Activated B cell treated with CpG ODN at 0.5 μM for 24 hours (primary cell): ENCODE measurements at regions of chr5 and their contacts with region 1.

Region 1: DNA sequence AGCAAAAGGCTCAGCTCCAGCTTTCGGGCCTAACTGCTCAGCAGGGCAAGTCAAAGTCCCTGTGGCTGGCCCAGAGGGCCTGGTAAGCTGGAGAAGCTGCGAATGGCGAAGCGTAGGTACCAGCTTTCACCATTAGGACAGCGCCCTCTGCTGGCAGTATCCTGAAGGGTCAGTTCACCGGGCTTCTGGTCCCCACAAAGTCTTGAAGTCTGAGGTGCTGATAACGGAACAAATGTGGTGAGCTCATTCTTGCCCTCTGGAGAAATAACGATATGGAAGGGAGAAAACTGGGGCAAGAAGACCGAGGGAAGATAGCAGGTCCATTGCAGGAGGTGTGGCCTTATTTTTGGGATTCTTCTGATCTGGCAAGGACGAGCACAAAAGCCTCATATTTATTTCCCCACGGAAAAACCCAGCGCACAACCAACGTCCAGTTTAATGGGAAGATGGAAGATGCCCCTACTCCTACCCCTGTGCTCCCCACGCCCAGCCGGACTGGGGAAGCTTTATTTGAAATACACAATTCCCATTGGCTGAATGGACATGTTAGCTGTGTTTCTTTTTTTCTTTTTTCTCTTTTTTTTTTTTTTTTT is 7.2 kb downstream of the SOWAHA start:
- DNase-seq: peak; percentile 70
- ATAC-seq: peak; percentile 89
- H3K4me3 Mint-ChIP-seq: peak overlapping the region; percentile 38
- H3K27ac Mint-ChIP-seq: no peak overlapping the region
- H3K4me1 Mint-ChIP-seq: peaks cover 12% of the 10 kb centered on the region
- H3K27me3 Mint-ChIP-seq: peaks cover 27% of the 10 kb centered on the region
- CTCF ChIP-seq: no peak

Region 2: GRCh38 chr5:131453826-131454225 is 1366.4 kb before region 1 on chr5:
- CTCF ChIA-PET with region 1: no interaction called
- POLR2A ChIA-PET with region 1: no interaction called
- intact Hi-C with region 1: no loop called
- DNase-seq: no peak
- ATAC-seq: no peak
- H3K4me3 Mint-ChIP-seq: no peak overlapping the region
- H3K27ac Mint-ChIP-seq: no peak overlapping the region
- H3K4me1 Mint-ChIP-seq: no peaks in the 10 kb centered on the region
- H3K27me3 Mint-ChIP-seq: no peaks in the 10 kb centered on the region
- CTCF ChIP-seq: no peak

Region 3: GRCh38 chr5:132272311-132273210 is 547.7 kb before region 1 on chr5:
- CTCF ChIA-PET with region 1: no interaction called
- POLR2A ChIA-PET with region 1: no interaction called
- intact Hi-C with region 1: loop called (anchors 1 kb)
- DNase-seq: peak; percentile 66
- ATAC-seq: peak; percentile 51
- H3K4me3 Mint-ChIP-seq: peak overlapping the region; percentile 4
- H3K27ac Mint-ChIP-seq: no peak overlapping the region
- H3K4me1 Mint-ChIP-seq: peaks cover 12% of the 10 kb centered on the region
- H3K27me3 Mint-ChIP-seq: peaks cover 11% of the 10 kb centered on the region
- CTCF ChIP-seq: peak; percentile 96

Region 4: DNA sequence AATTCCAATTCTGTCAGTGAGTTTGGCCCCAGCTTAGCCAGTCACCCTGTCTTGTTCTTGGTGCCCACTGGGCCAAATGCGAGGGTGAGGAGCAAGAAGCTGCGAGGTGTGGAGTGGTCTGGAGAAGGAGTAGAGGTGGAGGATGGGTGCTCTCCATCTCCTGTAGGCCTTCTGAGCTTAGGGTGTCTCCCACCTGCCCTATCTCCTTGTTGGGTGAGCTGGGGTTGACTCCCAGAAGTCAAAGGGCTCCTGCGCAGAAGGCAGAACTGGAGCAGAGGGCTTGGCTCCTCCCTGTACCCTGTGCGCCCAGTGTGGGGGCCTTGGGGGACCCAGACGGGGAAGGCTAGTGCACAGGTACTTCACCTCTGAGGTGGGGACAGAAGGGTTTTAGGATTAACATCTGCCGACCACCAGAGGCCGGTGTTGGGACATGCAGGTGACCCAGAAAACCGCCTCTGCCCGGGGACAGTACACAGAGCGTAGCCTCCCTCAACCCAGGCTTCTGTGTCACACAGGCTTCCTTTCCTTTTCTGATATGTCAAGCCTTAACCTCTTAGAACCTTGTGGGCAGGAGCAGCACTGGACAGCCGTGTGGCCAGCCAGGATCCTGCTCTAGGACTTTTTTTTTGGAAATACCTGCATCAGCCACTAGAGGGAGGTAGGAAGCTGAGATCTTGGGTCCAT is 293.8 kb before region 1 on chr5:
- CTCF ChIA-PET with region 1: interaction called, 23 read pairs
- POLR2A ChIA-PET with region 1: no interaction called
- intact Hi-C with region 1: loop called (anchors 1 kb)
- DNase-seq: peak; percentile 26
- ATAC-seq: peak; percentile 51
- H3K4me3 Mint-ChIP-seq: peak overlapping the region; percentile 25
- H3K27ac Mint-ChIP-seq: peak overlapping the region; percentile 27
- H3K4me1 Mint-ChIP-seq: peaks cover 53% of the 10 kb centered on the region
- H3K27me3 Mint-ChIP-seq: no peaks in the 10 kb centered on the region
- CTCF ChIP-seq: peak; percentile 69

Region 5: GRCh38 chr5:132736853-132737833 is 83.1 kb before region 1 on chr5 and contains the start of gene KIF3A:
- CTCF ChIA-PET with region 1: interaction called, 4 read pairs
- POLR2A ChIA-PET with region 1: no interaction called
- intact Hi-C with region 1: loop called (anchors 1 kb)
- DNase-seq: peak; percentile 98
- ATAC-seq: peak; percentile 92
- H3K4me3 Mint-ChIP-seq: peak within 1 kb of the TSS; percentile 90
- H3K27ac Mint-ChIP-seq: peak within 1 kb of the TSS; percentile 87
- H3K4me1 Mint-ChIP-seq: peaks cover 18% of the 10 kb centered on the region
- H3K27me3 Mint-ChIP-seq: peaks cover 5% of the 10 kb centered on the region
- CTCF ChIP-seq: no peak
- total RNA-seq, gene KIF3A: 9.2 and 9.8 TPM in 2 replicates

Region 6: GRCh38 chr5:132807163-132807838 is 13.0 kb before region 1 on chr5:
- CTCF ChIA-PET with region 1: interaction called, 10 read pairs
- POLR2A ChIA-PET with region 1: interaction called, 4 read pairs
- intact Hi-C with region 1: no loop called
- DNase-seq: no peak
- ATAC-seq: no peak
- H3K4me3 Mint-ChIP-seq: no peak overlapping the region
- H3K27ac Mint-ChIP-seq: no peak overlapping the region
- H3K4me1 Mint-ChIP-seq: peaks cover 11% of the 10 kb centered on the region
- H3K27me3 Mint-ChIP-seq: peaks cover 53% of the 10 kb centered on the region
- CTCF ChIP-seq: no peak